Mammary epithelial cell (primary cell): ENCODE measurements at regions of chr7 and their contacts with region 1.

Region 1: GRCh38 chr7:157124690-157125089 is 14.0 kb upstream of the UBE3C start:
- DNase-seq: no peak
- H3K4me3 ChIP-seq: no peak overlapping the region
- H3K27ac ChIP-seq: no peak overlapping the region
- H3K4me1 ChIP-seq: peaks cover 6% of the 10 kb centered on the region
- H3K27me3 ChIP-seq: no peaks in the 10 kb centered on the region
- CTCF ChIP-seq: no peak

Region 2: DNA sequence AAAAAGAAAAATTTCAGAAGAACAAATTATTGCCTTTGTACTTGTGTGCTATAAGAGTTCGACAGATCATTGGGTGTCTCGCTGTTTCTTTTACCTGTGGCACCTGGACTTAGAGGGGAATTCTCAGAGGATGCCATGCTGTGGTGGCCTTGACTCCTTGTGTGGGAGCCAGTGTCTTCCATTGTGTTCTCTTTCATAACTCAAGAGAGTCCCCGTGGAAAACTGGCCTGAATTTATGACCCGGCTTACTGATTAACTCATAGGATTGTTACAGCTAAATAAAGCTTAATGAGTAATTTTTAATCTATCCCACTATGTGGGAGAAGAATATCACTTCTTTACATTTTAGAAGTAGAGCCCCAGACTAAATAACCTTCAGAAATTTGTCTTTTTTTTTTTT is 68.6 kb after region 1 on chr7:
- CTCF ChIA-PET with region 1: no interaction called
- dilution Hi-C with region 1: no loop called
- in situ Hi-C with region 1: no loop called
- intact Hi-C with region 1: no loop called
- DNase-seq: no peak
- H3K4me3 ChIP-seq: no peak overlapping the region
- H3K27ac ChIP-seq: no peak overlapping the region
- H3K4me1 ChIP-seq: peaks cover 2% of the 10 kb centered on the region
- H3K27me3 ChIP-seq: no peaks in the 10 kb centered on the region
- CTCF ChIP-seq: no peak

Region 3: DNA sequence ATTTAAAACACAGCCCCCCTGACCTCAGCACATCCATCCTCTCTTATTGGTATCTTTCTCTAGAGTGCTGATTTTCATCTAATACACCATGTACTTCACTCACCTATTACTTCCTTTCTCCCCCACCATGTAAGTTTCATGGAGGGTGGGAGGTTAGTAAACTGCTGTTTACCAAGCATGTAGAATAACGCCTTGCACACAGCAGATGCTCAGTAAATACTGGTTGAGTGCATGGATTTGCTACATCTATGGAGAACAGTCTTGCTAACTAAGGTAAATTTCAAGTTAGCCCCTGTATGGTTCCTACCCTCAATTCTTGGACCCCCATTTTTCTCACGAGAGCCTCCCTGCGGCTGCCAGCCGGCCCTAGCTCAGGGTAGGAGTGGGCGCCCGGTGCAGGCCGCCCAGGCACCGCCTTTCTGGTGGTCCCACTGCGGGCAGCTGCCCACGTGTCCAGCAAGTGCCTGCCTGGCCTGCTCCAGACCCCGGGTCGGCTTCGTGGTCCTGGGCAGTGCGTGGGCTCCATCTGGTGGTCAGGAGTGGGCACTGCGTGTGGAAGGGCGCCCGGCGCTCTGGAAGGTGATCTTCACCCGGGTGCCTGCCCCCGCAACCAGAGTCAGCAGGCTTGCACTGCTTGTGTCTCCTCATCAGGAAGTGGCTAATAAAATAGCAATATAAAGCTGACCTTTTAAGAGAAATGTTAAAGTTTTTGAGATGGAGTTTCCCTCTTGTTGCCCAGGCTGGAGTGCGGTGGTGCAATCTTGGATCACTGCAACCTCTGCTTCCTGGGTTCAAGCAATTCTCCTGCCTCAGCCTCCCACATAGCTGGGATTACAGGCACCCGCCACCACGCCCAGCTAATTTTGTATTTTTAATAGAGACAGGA is 148.8 kb after region 1 on chr7:
- CTCF ChIA-PET with region 1: interaction called, 10 read pairs
- dilution Hi-C with region 1: no loop called
- in situ Hi-C with region 1: no loop called
- intact Hi-C with region 1: no loop called
- DNase-seq: peak; percentile 56
- H3K4me3 ChIP-seq: no peak overlapping the region
- H3K27ac ChIP-seq: no peak overlapping the region
- H3K4me1 ChIP-seq: peaks cover 36% of the 10 kb centered on the region
- H3K27me3 ChIP-seq: no peaks in the 10 kb centered on the region
- CTCF ChIP-seq: peak; percentile 85 to 94